Sigmoid colon (tissue), 7 donors: ENCODE measurements at regions of chr1 and their contacts with region 1.

Region 1: DNA sequence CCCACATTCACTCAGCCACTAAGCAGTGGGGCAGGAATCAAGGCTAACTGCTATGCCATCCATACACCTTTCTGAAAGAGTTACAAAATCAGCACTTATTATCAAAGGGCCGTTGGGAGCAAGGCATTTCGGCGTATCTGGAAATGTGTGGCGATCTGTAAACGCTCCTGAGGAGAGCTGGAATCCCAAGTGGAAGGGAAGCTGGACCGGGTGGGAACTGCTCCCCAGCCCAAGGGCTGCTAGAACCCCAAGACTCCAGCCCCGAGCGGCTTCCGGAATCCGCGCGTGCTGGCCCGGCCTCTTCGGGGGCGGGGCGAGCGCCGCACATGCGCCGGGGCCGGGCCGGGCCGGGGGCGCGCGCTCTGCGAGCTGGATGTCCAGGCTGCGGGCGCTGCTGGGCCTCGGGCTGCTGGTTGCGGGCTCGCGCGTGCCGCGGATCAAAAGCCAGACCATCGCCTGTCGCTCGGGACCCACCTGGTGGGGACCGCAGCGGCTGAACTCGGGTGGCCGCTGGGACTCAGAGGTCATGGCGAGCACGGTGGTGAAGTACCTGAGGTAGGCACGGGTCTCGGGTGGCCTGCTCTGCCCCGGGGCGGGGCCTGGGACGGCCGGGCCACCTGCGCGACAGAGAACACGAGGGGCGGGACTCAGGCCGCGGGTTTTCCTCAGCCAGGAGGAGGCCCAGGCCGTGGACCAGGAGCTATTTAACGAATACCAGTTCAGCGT is at the start of gene NAXE:
- DNase-seq: peak; percentile 88
- H3K4me3 ChIP-seq: peak within 1 kb of the TSS; percentile 54 to 83 (median 68)
- H3K27ac ChIP-seq: peak within 1 kb of the TSS; percentile 87 to 95 (median 90)
- H3K4me1 ChIP-seq: peaks cover 0 to 17% (median 10%) of the 10 kb centered on the region in 4 donors
- H3K27me3 ChIP-seq: no peaks in the 10 kb centered on the region
- CTCF ChIP-seq: no peak
- EP300 ChIP-seq: no peak
- POLR2A ChIP-seq: peak; percentile 46 to 72
- total RNA-seq, gene NAXE: 59.3 to 113 (median 67.2) TPM

Region 2: DNA sequence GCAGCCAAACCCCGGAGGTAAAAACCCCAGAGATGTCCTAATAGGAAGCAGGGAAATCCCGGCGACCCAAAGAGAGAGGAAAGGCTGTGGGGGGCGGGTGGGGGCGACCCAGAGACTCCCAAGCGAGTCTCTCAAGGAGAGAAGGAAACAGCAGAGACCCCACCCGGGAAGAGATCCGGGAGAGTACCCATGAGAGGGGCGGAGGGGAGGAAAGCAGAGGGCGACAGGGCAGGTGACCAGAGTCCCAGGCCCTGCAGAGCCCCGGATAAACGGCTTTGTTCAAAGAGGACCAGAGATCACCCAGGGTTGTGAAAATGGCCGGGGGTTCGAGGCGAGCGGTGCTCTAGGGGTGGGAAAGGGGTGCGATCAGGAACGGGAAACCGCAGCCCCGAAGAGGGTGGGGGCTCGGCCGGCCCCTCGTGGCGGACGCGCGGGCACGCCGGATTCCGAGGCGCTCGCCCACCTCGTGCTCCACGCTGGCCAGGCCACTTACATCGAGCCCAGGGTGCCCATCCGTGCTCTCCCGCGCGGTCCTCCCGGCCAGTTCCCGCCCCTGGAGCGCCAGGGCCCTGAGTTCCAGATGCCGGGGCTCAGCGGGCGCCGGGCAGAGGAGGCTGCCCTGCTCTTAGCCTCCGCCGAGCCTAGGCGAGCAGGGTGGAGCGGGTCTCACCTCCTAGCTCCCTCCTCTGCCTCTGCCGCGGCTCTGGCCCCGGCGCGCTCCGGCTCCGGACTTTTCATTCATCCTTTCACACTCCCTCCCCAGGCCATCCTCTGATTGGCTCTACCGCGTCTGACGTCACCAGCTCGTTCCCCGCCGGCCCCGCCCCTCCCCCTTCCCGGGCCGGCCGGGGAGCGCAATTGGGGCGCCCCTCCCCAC is 170.3 kb before region 1 on chr1:
- intact Hi-C with region 1: no loop called
- DNase-seq: peak; percentile 83
- H3K4me3 ChIP-seq: peak overlapping the region in 3 of 4 donors; percentile 17 to 36 (median 36)
- H3K27ac ChIP-seq: no peak overlapping the region
- H3K4me1 ChIP-seq: peaks cover 0 to 23% (median 23%) of the 10 kb centered on the region in 4 donors
- H3K27me3 ChIP-seq: peaks cover 42 to 100% (median 74%) of the 10 kb centered on the region in 3 donors
- CTCF ChIP-seq: no peak
- EP300 ChIP-seq: no peak
- POLR2A ChIP-seq: no peak

Region 3: GRCh38 chr1:156510709-156511108 is 80.9 kb before region 1 on chr1:
- intact Hi-C with region 1: loop called (anchors 5 kb)
- DNase-seq: peak; percentile 99
- H3K4me3 ChIP-seq: no peak overlapping the region
- H3K27ac ChIP-seq: peak overlapping the region; percentile 98 to 100 (median 100)
- H3K4me1 ChIP-seq: peaks cover 0 to 73% (median 67%) of the 10 kb centered on the region in 4 donors
- H3K27me3 ChIP-seq: no peaks in the 10 kb centered on the region
- CTCF ChIP-seq: no peak
- EP300 ChIP-seq: peak; percentile 73 to 97 (median 92)
- POLR2A ChIP-seq: peak in 1 of 2 donors; percentile 48

Region 4: GRCh38 chr1:156560585-156561183 is 30.9 kb before region 1 on chr1:
- intact Hi-C with region 1: no loop called
- DNase-seq: peak; percentile 65
- H3K4me3 ChIP-seq: no peak overlapping the region
- H3K27ac ChIP-seq: peak overlapping the region in 2 of 4 donors; percentile 37 to 39
- H3K4me1 ChIP-seq: no peaks in the 10 kb centered on the region
- H3K27me3 ChIP-seq: no peaks in the 10 kb centered on the region
- CTCF ChIP-seq: no peak
- EP300 ChIP-seq: no peak
- POLR2A ChIP-seq: no peak

Region 5: GRCh38 chr1:156936721-156937220 is 345.2 kb after region 1 on chr1:
- intact Hi-C with region 1: no loop called
- DNase-seq: peak; percentile 34
- H3K4me3 ChIP-seq: no peak overlapping the region
- H3K27ac ChIP-seq: no peak overlapping the region
- H3K4me1 ChIP-seq: peaks cover 0 to 4% (median 3%) of the 10 kb centered on the region in 4 donors
- H3K27me3 ChIP-seq: no peaks in the 10 kb centered on the region
- CTCF ChIP-seq: no peak
- EP300 ChIP-seq: no peak
- POLR2A ChIP-seq: no peak